ENCODE measurements at regions of chr2 and their contacts with region 1.

Region 1: GRCh38 chr2:109062859-109063700 is 65.9 kb upstream of the SH3RF3 start:
- DNase-seq: peak in 3 of 9 experiments; percentile 12 to 54 (median 20)
- ATAC-seq: no peak
- H3K4me3 ChIP-seq: no peak overlapping the region
- H3K4me3 Mint-ChIP-seq: no peak overlapping the region
- H3K27ac ChIP-seq: no peak overlapping the region
- H3K27ac Mint-ChIP-seq: no peak overlapping the region
- H3K4me1 ChIP-seq: peaks cover 19% of the 10 kb centered on the region
- H3K4me1 Mint-ChIP-seq: peaks cover 43% of the 10 kb centered on the region
- H3K27me3 ChIP-seq: no peaks in the 10 kb centered on the region
- H3K27me3 Mint-ChIP-seq: no peaks in the 10 kb centered on the region
- CTCF ChIP-seq: no peak

Region 2: GRCh38 chr2:109020217-109020637 is 42.9 kb before region 1 on chr2:
- CTCF ChIA-PET with region 1: no interaction called
- POLR2A ChIA-PET with region 1: no interaction called
- intact Hi-C with region 1: loop called in 1 of 2 experiments (anchors 5 kb)
- DNase-seq: peak in 2 of 9 experiments; percentile 24 to 48
- ATAC-seq: peak; percentile 92
- H3K4me3 ChIP-seq: no peak overlapping the region
- H3K4me3 Mint-ChIP-seq: peak overlapping the region; percentile 9
- H3K27ac ChIP-seq: no peak overlapping the region
- H3K27ac Mint-ChIP-seq: peak overlapping the region; percentile 23
- H3K4me1 ChIP-seq: peaks cover 16% of the 10 kb centered on the region
- H3K4me1 Mint-ChIP-seq: peaks cover 36% of the 10 kb centered on the region
- H3K27me3 ChIP-seq: no peaks in the 10 kb centered on the region
- H3K27me3 Mint-ChIP-seq: no peaks in the 10 kb centered on the region
- CTCF ChIP-seq: no peak

Measured in CD8-positive, alpha-beta T cell (primary cell).